Natural killer cell (primary cell): ENCODE measurements at regions of chr1 and their contacts with region 1.

Region 1: DNA sequence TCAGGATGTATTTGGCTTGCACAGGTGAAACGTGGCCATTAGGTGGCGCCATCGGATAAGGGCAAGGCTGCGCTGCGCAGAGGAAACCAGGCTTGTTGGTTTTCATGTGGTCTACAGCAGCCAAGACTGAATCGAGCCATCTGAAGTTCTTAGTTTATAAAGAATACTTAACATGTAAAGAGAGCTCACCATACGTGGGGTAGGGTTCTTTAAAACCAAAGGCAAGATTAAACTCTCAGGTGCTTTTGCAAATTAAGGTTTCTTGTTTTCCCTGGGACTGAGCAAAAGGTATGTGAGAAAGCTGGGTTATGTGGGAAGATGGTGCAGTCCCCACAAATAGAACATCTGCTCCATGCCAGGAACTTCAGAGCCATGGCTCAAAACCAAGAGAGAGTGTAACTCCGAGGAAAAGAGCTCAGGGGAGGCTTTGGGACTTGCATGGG is 9.3 kb downstream of the MASP2 start:
- DNase-seq: peak; percentile 85 to 95
- ATAC-seq: peak; percentile 95 to 100 (median 100)
- H3K4me3 ChIP-seq: no peak overlapping the region
- H3K4me3 Mint-ChIP-seq: no peak overlapping the region
- H3K27ac ChIP-seq: no peak overlapping the region
- H3K27ac Mint-ChIP-seq: no peak overlapping the region
- H3K4me1 ChIP-seq: peaks cover 5% of the 10 kb centered on the region
- H3K4me1 Mint-ChIP-seq: no peaks in the 10 kb centered on the region
- H3K27me3 ChIP-seq: no peaks in the 10 kb centered on the region
- H3K27me3 Mint-ChIP-seq: no peaks in the 10 kb centered on the region
- CTCF ChIP-seq: peak; percentile 97

Region 2: DNA sequence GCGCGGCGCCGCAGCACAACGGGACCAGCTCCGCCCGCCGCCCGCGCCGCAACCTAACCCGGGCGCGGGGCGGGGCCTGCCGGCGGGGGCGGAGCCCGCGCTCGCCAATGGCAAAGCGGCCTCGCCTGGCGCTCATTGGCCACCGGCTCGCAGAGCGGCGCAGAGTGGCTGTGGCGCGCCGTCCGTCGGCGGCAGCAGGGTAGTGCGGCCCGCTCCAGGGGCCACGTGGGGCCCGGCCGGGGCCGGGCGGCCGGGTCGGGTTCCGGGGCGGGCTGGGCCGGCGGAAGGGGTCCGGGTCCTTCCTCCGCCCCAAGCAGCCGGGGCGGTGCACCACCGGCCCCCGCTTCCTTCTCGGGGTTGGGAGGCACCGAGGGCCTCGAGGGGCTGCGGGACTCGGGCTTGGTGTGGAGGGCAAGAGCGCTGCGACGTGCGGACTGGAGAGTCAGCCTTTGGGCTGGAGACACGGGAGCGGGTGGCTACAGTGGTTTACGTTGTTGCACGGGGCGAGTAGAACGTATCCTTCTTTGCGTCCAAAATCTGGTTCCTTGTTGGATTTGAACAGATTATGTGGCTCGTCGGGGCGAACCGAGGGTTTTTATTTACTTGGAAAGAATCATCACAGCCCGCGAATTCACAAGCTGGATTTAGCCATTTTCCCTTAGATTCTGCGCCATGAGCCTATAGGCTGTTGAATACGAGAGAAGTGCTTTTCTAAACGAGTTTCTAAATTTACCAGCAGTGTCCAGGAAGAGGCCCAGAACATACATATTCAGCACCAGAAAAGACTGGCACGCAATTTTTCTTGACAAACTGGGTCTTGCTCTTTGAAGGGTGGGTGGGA is 22.4 kb after region 1 on chr1 and contains the start of gene SRM:
- intact Hi-C with region 1: loop called (anchors 2 kb)
- DNase-seq: peak; percentile 92 to 95
- ATAC-seq: peak; percentile 93 to 98 (median 93)
- H3K4me3 ChIP-seq: peak within 1 kb of the TSS; percentile 75
- H3K4me3 Mint-ChIP-seq: peak within 1 kb of the TSS; percentile 92
- H3K27ac ChIP-seq: peak within 1 kb of the TSS; percentile 28
- H3K27ac Mint-ChIP-seq: peak within 1 kb of the TSS; percentile 86 to 90
- H3K4me1 ChIP-seq: peaks cover 47% of the 10 kb centered on the region
- H3K4me1 Mint-ChIP-seq: peaks cover 30 to 41% of the 10 kb centered on the region in 2 donors
- H3K27me3 ChIP-seq: no peaks in the 10 kb centered on the region
- H3K27me3 Mint-ChIP-seq: no peaks in the 10 kb centered on the region
- CTCF ChIP-seq: peak; percentile 36
- total RNA-seq, gene SRM: 23.9 to 30.9 (median 29.2) TPM

Region 3: DNA sequence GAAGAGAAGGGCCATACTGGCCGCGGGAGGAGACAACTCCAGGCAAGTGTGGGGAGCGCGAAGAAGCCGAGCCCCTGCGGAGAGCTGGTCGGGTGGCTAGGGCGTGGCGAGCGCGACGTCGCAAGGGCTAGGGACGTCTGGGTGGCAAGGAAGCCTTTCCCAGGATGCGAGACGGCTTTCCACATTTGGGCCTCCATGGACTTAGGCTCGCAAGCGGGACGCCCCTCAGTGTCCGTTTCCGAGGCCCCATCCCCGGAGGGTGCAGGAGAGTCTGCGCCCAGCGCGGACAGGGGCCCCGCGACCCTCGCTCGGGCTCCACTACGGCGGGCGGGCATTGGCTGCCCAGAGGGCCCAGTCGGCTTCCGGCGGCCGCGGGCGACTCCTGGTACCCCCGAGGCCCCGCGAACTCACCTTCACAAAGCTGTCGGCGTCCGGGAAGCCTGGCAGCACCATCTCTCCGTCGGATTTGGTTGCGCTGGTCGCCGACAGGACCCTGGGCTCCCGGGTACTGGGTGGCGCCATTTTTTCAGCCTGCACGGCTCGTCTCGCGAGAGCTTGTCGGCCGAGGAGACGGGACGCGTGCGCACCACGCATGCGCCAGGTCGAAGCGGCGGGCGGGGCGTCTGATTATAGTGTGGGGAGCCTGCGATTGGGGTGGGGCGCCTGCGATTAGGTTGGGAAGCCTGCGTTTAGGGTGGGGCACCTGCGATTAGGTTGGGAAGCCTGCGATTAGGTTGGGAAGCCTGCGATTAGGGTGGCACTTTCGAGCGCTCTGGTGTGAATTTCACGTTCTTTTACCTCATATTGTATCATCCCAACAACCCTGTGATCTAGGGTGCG is 61.8 kb after region 1 on chr1 and contains the start of gene EXOSC10:
- intact Hi-C with region 1: loop called (anchors 1 kb)
- DNase-seq: peak; percentile 93 to 97
- ATAC-seq: peak; percentile 96 to 98 (median 98)
- H3K4me3 ChIP-seq: peak within 1 kb of the TSS; percentile 88
- H3K4me3 Mint-ChIP-seq: peak within 1 kb of the TSS; percentile 98
- H3K27ac ChIP-seq: peak within 1 kb of the TSS; percentile 71
- H3K27ac Mint-ChIP-seq: peak within 1 kb of the TSS; percentile 89 to 92
- H3K4me1 ChIP-seq: peaks cover 13% of the 10 kb centered on the region
- H3K4me1 Mint-ChIP-seq: peaks cover 13 to 16% of the 10 kb centered on the region in 2 donors
- H3K27me3 ChIP-seq: no peaks in the 10 kb centered on the region
- H3K27me3 Mint-ChIP-seq: no peaks in the 10 kb centered on the region
- CTCF ChIP-seq: no peak
- total RNA-seq, gene EXOSC10: 85.2 to 97.2 (median 94.9) TPM

Region 4: DNA sequence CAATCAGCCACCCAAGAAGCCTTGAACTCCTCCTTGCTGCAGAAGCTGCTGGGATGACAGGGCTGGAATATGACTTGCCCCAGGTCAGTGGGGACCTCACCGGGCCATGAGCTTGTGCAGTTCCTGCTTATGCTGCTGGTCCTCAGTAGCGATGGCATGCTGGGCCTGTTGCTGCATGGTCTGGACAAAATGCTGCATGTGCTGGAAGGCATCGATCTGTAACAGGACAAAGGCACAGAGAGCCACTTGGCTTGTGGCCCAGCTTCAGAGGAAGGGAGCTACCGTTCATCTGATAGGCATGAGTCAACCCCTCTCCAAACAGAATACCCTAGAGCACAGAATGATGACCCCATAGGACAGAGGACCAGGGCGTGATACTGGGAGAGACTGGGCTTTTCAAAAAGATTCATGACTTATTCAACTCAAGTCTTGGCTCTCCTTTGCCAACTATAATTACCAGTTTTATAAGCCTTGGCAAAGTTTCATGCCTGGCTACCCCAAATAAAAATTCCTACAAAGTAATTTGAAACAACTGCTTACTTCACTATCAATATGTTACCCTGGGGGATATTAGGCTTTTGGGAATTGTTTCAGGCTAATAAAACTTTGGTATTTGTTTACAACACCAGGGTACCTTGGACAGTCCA is 96.6 kb after region 1 on chr1:
- intact Hi-C with region 1: no loop called
- DNase-seq: no peak
- ATAC-seq: no peak
- H3K4me3 ChIP-seq: no peak overlapping the region
- H3K4me3 Mint-ChIP-seq: no peak overlapping the region
- H3K27ac ChIP-seq: no peak overlapping the region
- H3K27ac Mint-ChIP-seq: no peak overlapping the region
- H3K4me1 ChIP-seq: no peaks in the 10 kb centered on the region
- H3K4me1 Mint-ChIP-seq: no peaks in the 10 kb centered on the region
- H3K27me3 ChIP-seq: no peaks in the 10 kb centered on the region
- H3K27me3 Mint-ChIP-seq: no peaks in the 10 kb centered on the region
- CTCF ChIP-seq: no peak

Region 5: DNA sequence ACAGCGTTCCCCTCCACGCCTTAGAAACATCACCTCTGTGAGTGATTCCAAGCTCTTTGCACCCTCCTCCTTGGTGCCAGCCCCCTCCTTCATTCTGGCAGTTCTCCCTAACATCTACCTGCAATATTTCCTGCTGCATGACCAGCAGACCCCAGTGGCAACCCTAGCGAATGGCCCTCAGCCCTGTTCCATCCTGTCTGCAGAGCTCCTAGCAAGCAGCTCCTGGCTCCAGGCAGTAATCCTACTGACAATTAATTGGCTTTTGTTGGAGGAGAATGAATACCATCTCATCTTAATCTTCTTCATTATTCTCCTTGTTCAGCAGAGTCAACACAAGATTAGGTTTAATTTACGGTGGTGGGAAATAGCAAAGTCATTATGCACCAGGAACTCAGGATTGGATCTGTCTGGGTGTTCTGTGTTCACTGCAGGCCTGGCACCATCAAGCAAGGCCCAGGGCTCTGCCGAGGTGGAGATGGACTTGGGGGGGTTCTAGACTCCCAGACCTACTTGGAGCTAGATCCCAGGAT is 604.1 kb after region 1 on chr1:
- intact Hi-C with region 1: loop called (anchors 1 kb)
- DNase-seq: no peak
- ATAC-seq: no peak
- H3K4me3 ChIP-seq: no peak overlapping the region
- H3K4me3 Mint-ChIP-seq: no peak overlapping the region
- H3K27ac ChIP-seq: no peak overlapping the region
- H3K27ac Mint-ChIP-seq: no peak overlapping the region
- H3K4me1 ChIP-seq: no peaks in the 10 kb centered on the region
- H3K4me1 Mint-ChIP-seq: peaks cover 0 to 9% of the 10 kb centered on the region in 2 donors
- H3K27me3 ChIP-seq: peaks cover 4% of the 10 kb centered on the region
- H3K27me3 Mint-ChIP-seq: no peaks in the 10 kb centered on the region
- CTCF ChIP-seq: no peak

Region 6: DNA sequence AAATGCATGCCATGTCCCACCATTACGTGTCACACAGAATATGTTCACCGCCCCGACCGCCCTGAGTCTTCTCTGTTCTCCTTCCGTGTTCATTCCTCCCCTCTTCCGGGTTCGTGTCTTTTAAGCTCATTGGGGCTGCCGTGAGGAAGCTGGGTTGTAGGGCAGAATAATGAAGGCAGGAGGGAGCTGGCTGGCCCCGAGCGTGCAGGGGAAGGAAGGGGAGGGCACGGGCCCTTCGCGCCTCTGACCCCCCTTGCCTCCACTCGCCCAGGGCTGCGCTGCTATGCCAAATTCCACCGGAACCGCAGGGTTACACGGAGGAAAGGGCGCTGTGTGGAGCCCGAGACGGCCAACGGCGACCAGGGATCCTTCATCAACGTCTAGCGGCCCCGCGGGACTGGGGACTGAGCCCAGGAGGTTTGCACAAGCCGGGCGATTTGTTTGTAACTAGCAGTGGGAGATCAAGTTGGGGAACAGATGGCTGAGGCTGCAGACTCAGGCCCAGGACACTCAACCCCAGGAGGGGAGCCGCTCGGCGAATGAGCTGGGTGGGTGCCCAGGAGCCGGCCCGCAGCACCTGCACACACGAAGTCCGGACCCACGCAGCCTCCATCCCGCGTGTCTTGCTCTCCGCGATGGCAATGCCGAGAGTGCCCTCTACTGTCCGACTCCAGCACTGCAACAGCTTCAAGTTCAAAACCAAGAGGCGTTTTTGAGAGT is 681.7 kb after region 1 on chr1:
- intact Hi-C with region 1: loop called (anchors 10 kb)
- DNase-seq: peak; percentile 89 to 95
- ATAC-seq: peak; percentile 84 to 92 (median 87)
- H3K4me3 ChIP-seq: peak overlapping the region; percentile 40
- H3K4me3 Mint-ChIP-seq: peak overlapping the region; percentile 83
- H3K27ac ChIP-seq: peak overlapping the region; percentile 75
- H3K27ac Mint-ChIP-seq: peak overlapping the region; percentile 91 to 93
- H3K4me1 ChIP-seq: peaks cover 20% of the 10 kb centered on the region
- H3K4me1 Mint-ChIP-seq: peaks cover 17 to 19% of the 10 kb centered on the region in 2 donors
- H3K27me3 ChIP-seq: no peaks in the 10 kb centered on the region
- H3K27me3 Mint-ChIP-seq: no peaks in the 10 kb centered on the region
- CTCF ChIP-seq: peak; percentile 98